ENCODE measurements at regions of chr7 and their contacts with region 1.

Region 1: DNA sequence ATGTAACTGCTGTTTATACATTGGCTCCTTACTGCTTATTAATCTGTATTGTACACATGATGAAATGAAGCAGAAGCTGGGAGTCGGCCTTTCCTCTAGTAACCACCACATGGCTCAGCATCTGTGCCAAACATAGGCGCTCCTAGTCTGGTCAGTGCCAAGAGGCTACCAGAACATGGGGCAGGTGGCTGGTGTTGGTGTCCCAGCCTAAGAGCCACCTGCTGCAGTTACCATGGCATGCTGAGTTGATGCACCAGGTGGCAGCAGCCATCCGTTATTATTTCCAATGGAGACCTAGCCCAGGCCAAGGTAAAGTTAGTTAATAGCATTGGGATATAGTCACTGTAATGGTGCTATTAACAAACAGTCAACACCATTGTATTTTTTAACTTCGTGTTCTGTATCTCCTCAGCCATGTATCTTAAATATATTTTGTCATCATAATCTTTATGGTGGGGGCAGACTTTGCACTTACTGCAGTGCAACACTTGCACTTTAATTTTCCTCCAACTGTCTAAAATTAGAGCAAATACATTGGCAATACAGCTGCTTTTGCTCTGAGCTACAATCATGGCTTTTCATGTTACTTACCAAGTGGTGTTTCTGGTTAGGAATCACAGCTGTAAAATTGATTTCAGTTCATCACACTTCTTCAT is 33.1 kb downstream of the HBP1 start:
- DNase-seq: peak; percentile 46 to 53
- H3K4me3 ChIP-seq: no peak overlapping the region
- H3K4me3 Mint-ChIP-seq: no peak overlapping the region
- H3K27ac Mint-ChIP-seq: no peak overlapping the region
- H3K4me1 ChIP-seq: no peaks in the 10 kb centered on the region
- H3K4me1 Mint-ChIP-seq: peaks cover 11% of the 10 kb centered on the region
- H3K27me3 ChIP-seq: no peaks in the 10 kb centered on the region
- H3K27me3 Mint-ChIP-seq: no peaks in the 10 kb centered on the region
- CTCF ChIP-seq: peak; percentile 39 to 66

Region 2: DNA sequence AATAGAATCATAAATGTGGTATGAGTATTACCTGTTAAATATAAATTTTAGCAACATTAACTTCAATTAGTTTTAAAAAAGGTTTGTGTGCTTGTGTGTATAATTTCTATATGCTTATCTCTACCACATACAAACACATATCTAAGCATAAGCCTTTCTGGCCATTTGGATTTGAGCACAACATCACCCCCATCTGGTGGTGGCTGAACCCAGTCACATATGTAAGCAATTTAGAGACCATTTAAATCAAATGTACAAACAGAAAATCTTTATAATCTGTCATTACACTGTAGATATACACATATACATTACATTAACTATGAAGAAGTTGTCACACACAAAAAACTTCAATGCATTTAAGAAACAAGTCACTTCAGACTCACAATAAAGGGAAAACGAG is 299.7 kb after region 1 on chr7:
- CTCF ChIA-PET with region 1: no interaction called
- POLR2A ChIA-PET with region 1: no interaction called
- intact Hi-C with region 1: loop called (anchors 2 kb)
- DNase-seq: peak in 1 of 2 experiments; percentile 38
- H3K4me3 ChIP-seq: no peak overlapping the region
- H3K4me3 Mint-ChIP-seq: no peak overlapping the region
- H3K27ac Mint-ChIP-seq: no peak overlapping the region
- H3K4me1 ChIP-seq: peaks cover 10% of the 10 kb centered on the region
- H3K4me1 Mint-ChIP-seq: no peaks in the 10 kb centered on the region
- H3K27me3 ChIP-seq: no peaks in the 10 kb centered on the region
- H3K27me3 Mint-ChIP-seq: no peaks in the 10 kb centered on the region
- CTCF ChIP-seq: peak; percentile 12 to 49

Measured in Caco-2 (cell line).